HCT116 (cell line): ENCODE measurements at regions of chr18 and their contacts with region 1.

Region 1: DNA sequence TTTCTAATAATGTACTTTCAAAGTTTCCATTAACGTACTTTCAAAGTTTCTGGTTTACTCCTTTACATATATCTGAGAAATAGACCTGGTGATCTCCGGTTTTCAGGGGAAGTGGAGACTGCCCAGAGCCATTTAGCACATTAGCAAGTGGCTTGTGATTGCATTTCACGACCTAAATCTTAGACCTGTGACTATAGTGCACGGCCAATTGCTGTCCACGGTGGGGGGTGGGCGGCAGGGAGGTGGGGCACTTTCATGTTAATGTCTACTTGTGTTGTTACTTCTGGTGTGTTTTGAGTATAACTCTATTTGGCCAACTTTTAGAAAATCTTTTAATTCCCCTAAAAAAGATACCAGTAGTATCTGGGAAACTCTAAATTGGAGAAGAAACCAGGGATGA is 11.3 kb downstream of the GATA6 start:
- DNase-seq: no peak
- ATAC-seq: no peak
- H3K4me3 ChIP-seq: no peak overlapping the region
- H3K27ac ChIP-seq: no peak overlapping the region
- H3K4me1 ChIP-seq: peaks cover 0 to 4% of the 10 kb centered on the region in 2 experiments; a peak in 1 of 4 replicates
- H3K27me3 ChIP-seq: no peaks in the 10 kb centered on the region
- CTCF ChIP-seq: no peak
- POLR2A ChIP-seq: no peak
- RAD21 ChIP-seq: no peak

Region 2: GRCh38 chr18:22057908-22058527 is 122.7 kb before region 1 on chr18:
- CTCF ChIA-PET with region 1: no interaction called
- POLR2A ChIA-PET with region 1: no interaction called
- RAD21 ChIA-PET with region 1: no interaction called
- intact Hi-C with region 1: no loop called
- DNase-seq: no peak
- ATAC-seq: no peak
- H3K4me3 ChIP-seq: no peak overlapping the region
- H3K27ac ChIP-seq: no peak overlapping the region
- H3K4me1 ChIP-seq: no peaks in the 10 kb centered on the region
- H3K27me3 ChIP-seq: no peaks in the 10 kb centered on the region
- CTCF ChIP-seq: no peak
- POLR2A ChIP-seq: no peak
- RAD21 ChIP-seq: no peak

Region 3: DNA sequence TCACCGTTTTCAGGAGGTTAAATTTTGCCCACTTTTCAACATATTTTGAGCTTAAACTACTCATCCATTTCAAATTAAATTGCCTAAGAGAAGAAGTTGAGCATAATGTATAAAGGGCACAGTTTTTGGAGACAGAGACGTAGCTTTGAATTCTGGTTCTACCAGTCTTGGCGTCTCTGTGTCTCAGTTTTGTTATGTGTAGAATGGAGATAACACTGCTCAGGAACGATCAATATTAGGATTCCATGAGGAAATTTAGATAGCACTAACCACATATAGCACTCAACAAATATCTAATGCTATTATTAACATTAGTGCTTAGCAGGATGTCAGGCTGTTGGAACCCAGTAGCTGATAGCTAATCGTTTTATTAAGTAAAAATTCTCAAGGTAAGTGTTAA is 51.8 kb before region 1 on chr18:
- CTCF ChIA-PET with region 1: no interaction called
- POLR2A ChIA-PET with region 1: no interaction called
- RAD21 ChIA-PET with region 1: no interaction called
- intact Hi-C with region 1: no loop called
- DNase-seq: no peak
- ATAC-seq: no peak
- H3K4me3 ChIP-seq: no peak overlapping the region
- H3K27ac ChIP-seq: no peak overlapping the region
- H3K4me1 ChIP-seq: no peaks in the 10 kb centered on the region
- H3K27me3 ChIP-seq: no peaks in the 10 kb centered on the region
- CTCF ChIP-seq: no peak
- POLR2A ChIP-seq: no peak
- RAD21 ChIP-seq: no peak

Region 4: DNA sequence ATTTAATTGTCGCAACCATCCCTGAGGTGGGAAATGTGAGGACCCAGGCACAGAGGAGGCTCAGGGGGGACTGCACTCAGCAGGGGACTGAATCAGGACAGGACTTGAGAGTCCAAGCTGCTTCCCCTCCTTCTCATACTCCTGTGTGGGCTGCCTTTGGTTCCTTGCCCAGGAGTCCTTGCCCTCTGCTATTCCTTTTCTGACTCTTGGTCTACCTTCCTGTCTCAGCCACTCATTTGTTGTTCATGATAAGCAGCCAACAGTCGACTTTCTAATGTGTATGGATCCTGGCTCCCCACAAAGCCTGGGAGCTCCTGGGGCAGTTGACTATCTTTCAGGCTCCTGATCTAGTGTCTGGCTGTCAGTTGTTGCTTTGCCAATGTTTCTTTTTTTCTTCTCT is 16.9 kb after region 1 on chr18:
- CTCF ChIA-PET with region 1: no interaction called
- POLR2A ChIA-PET with region 1: no interaction called
- RAD21 ChIA-PET with region 1: no interaction called
- intact Hi-C with region 1: loop called (anchors 2 kb)
- DNase-seq: no peak
- ATAC-seq: no peak
- H3K4me3 ChIP-seq: no peak overlapping the region
- H3K27ac ChIP-seq: no peak overlapping the region
- H3K4me1 ChIP-seq: no peaks in the 10 kb centered on the region
- H3K27me3 ChIP-seq: no peaks in the 10 kb centered on the region
- CTCF ChIP-seq: no peak
- POLR2A ChIP-seq: no peak
- RAD21 ChIP-seq: no peak